MCF 10A (cell line): ENCODE measurements at regions of chr17 and their contacts with region 1.

Region 1: DNA sequence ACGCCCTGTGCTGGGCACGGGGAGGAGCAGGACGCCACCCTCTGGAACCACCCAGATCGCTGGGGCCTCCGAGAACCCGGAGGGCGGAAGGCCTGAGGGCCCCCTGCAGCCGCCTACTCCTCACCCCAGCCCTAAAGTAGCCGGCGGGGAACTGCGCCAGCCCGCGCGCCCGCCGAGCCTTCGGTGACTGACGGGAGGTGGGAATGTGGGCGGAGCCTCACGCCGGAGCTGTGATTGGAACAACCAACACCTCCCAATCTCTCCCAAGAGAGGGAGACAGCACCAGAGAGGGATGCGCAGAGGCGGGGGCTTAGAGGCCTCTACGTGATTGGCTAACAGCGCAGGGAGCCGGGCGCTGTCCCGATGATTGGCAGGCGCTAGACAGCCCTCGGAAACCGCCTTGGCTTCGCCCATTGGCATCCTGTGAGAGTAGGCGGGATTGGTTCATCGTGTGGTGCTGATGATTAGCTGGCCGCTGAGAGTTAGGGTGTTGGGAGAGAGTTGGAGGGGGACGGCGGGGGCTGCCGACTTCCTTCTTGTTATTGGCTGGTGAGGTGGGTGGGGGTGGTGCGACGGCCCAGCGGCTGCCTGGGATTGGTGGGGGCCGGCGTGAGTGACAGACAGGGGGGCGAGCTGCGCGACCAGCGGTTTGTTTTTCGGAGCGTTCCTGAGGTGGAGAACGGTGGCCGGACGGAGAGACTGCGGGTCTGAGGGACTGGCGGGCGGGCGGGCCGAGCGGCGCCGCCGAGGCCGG is at the start of gene MAP3K3:
- DNase-seq: peak; percentile 100
- H3K4me3 Mint-ChIP-seq: peak within 1 kb of the TSS; percentile 93
- H3K27ac Mint-ChIP-seq: no peak within 1 kb of the TSS
- H3K4me1 Mint-ChIP-seq: peaks cover 20% of the 10 kb centered on the region
- H3K27me3 Mint-ChIP-seq: no peaks in the 10 kb centered on the region
- CTCF ChIP-seq: no peak
- total RNA-seq, gene MAP3K3: 12.8 and 13.8 TPM in 2 replicates

Region 2: DNA sequence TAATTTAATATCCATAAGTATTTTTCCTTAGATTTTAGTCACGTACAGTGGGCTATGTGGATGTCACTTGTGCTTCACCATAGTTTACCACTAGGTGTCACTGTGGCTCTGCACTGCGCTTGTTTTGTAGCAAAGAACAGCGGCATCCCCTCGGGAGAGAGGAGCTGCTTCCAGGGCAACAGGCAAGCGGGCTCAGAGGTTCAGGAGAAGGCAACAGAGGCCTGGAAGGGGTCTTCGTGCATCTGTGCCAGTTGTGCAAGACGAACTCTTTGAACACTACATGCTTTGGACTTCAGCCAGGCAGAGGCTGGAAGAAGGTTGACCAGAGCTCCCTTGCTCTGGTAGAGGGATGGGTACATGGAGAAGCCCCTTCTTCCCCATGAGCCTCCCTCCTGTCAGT is 196.5 kb before region 1 on chr17:
- CTCF ChIA-PET with region 1: interaction called, 12 read pairs
- POLR2A ChIA-PET with region 1: interaction called, 3 read pairs
- intact Hi-C with region 1: no loop called
- DNase-seq: peak; percentile 79
- H3K4me3 Mint-ChIP-seq: no peak overlapping the region
- H3K27ac Mint-ChIP-seq: no peak overlapping the region
- H3K4me1 Mint-ChIP-seq: peaks cover 11% of the 10 kb centered on the region
- H3K27me3 Mint-ChIP-seq: no peaks in the 10 kb centered on the region
- CTCF ChIP-seq: peak; percentile 94

Region 3: DNA sequence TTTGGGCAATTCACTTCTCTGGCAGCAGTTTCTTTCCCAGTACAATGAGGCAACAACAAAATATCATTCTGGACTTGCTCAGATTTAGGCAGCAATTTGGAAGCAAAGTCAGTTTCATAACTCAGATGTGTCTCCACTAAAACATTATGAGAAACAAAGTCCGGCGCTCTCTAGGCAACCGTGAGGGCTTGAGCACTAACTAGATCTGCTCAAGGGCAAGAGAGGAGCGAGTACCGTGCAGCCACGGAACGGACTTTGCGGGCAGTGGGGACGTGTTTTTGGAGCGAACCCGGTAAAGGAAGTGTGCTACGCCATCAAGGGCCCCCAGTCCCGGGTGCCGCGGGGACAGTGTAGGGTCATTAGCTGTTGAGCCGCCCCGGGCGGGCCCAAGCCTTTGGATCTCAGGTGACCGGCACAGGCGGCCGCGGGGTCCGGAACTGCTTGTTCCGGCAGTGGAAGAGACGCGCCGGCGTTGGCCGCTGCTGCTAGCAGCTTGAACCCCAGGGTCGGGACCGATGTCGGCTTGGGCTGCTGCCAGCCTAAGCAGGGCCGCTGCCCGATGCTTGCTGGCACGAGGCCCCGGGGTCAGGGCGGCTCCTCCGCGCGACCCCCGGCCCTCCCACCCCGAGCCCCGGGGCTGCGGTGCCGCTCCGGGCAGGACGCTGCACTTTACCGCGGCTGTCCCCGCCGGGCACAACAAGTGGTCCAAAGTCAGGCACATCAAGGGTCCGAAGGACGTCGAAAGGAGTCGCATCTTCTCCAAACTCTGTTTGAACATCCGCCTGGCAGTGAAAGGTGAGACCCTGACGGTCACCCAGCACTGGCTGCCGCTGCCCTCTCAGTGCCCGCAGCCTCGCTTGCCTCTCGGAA is 21.1 kb before region 1 on chr17 and contains the start of gene TACO1:
- CTCF ChIA-PET with region 1: interaction called, 3 read pairs
- POLR2A ChIA-PET with region 1: interaction called, 45 read pairs
- intact Hi-C with region 1: no loop called
- DNase-seq: peak; percentile 76
- H3K4me3 Mint-ChIP-seq: peak within 1 kb of the TSS; percentile 79
- H3K27ac Mint-ChIP-seq: peak within 1 kb of the TSS; percentile 88
- H3K4me1 Mint-ChIP-seq: peaks cover 4% of the 10 kb centered on the region
- H3K27me3 Mint-ChIP-seq: no peaks in the 10 kb centered on the region
- CTCF ChIP-seq: no peak
- total RNA-seq, gene TACO1: 36.5 and 38.7 TPM in 2 replicates

Region 4: GRCh38 chr17:63699638-63700527 is 77.9 kb after region 1 on chr17 and contains the start of gene LIMD2:
- CTCF ChIA-PET with region 1: no interaction called
- POLR2A ChIA-PET with region 1: no interaction called
- intact Hi-C with region 1: no loop called
- DNase-seq: no peak
- H3K4me3 Mint-ChIP-seq: peak within 1 kb of the TSS; percentile 40
- H3K27ac Mint-ChIP-seq: no peak within 1 kb of the TSS
- H3K4me1 Mint-ChIP-seq: no peaks in the 10 kb centered on the region
- H3K27me3 Mint-ChIP-seq: no peaks in the 10 kb centered on the region
- CTCF ChIP-seq: no peak
- total RNA-seq, gene LIMD2: 0.56 and 0.93 TPM in 2 replicates